Activated CD4-positive, alpha-beta memory T cell treated with anti-CD3 and anti-CD28 coated beads, Interleukin-2, amount 10 ng/mL, durations not matched to agents 7 days and 5 days (primary cell): ENCODE measurements at regions of chr17 and their contacts with region 1.

Region 1: GRCh38 chr17:76182016-76182764 is 41.1 kb upstream of the FOXJ1 start:
- DNase-seq: peak; percentile 96
- H3K4me3 Mint-ChIP-seq: peak overlapping the region; percentile 47
- H3K27ac Mint-ChIP-seq: peak overlapping the region; percentile 95
- H3K4me1 Mint-ChIP-seq: peaks cover 61% of the 10 kb centered on the region
- H3K27me3 Mint-ChIP-seq: no peaks in the 10 kb centered on the region

Region 2: GRCh38 chr17:76141212-76142038 is 40.8 kb before region 1 on chr17 and contains the start of gene FOXJ1:
- CTCF ChIA-PET with region 1: interaction called, 47 read pairs
- POLR2A ChIA-PET with region 1: interaction called, 28 read pairs
- DNase-seq: peak; percentile 94
- H3K4me3 Mint-ChIP-seq: peak within 1 kb of the TSS; percentile 71
- H3K27ac Mint-ChIP-seq: peak within 1 kb of the TSS; percentile 91
- H3K4me1 Mint-ChIP-seq: peaks cover 60% of the 10 kb centered on the region
- H3K27me3 Mint-ChIP-seq: peaks cover 14% of the 10 kb centered on the region
- total RNA-seq, gene FOXJ1: 0.13 to 0.15 TPM

Region 3: DNA sequence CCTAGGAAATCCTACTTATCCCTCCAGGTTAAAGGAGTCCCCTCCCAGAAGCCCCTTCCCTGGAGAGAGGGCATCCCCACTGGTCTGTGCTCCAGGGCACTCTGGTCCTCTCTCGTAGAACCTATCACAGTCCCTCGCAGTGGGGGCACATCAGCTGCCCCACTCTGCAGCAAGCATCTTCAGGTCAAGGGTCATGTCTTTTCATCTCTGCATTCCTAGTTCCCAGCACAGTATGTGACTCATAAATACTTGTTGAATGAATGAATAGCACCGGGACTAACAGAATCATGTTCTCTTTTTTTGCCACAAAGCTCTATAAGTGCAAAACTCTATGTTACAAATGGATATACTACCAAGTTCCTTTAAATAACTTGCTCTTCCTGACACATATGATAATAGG is 22.1 kb after region 1 on chr17:
- CTCF ChIA-PET with region 1: interaction called, 13 read pairs
- POLR2A ChIA-PET with region 1: interaction called, 20 read pairs
- DNase-seq: no peak
- H3K4me3 Mint-ChIP-seq: no peak overlapping the region
- H3K27ac Mint-ChIP-seq: no peak overlapping the region
- H3K4me1 Mint-ChIP-seq: peaks cover 68% of the 10 kb centered on the region
- H3K27me3 Mint-ChIP-seq: no peaks in the 10 kb centered on the region

Region 4: GRCh38 chr17:76246080-76247066 is 64.2 kb after region 1 on chr17:
- CTCF ChIA-PET with region 1: interaction called, 16 read pairs
- POLR2A ChIA-PET with region 1: interaction called, 39 read pairs
- DNase-seq: peak; percentile 87
- H3K4me3 Mint-ChIP-seq: peak overlapping the region; percentile 32
- H3K27ac Mint-ChIP-seq: peak overlapping the region; percentile 94
- H3K4me1 Mint-ChIP-seq: peaks cover 82% of the 10 kb centered on the region
- H3K27me3 Mint-ChIP-seq: peaks cover 5% of the 10 kb centered on the region

Region 5: DNA sequence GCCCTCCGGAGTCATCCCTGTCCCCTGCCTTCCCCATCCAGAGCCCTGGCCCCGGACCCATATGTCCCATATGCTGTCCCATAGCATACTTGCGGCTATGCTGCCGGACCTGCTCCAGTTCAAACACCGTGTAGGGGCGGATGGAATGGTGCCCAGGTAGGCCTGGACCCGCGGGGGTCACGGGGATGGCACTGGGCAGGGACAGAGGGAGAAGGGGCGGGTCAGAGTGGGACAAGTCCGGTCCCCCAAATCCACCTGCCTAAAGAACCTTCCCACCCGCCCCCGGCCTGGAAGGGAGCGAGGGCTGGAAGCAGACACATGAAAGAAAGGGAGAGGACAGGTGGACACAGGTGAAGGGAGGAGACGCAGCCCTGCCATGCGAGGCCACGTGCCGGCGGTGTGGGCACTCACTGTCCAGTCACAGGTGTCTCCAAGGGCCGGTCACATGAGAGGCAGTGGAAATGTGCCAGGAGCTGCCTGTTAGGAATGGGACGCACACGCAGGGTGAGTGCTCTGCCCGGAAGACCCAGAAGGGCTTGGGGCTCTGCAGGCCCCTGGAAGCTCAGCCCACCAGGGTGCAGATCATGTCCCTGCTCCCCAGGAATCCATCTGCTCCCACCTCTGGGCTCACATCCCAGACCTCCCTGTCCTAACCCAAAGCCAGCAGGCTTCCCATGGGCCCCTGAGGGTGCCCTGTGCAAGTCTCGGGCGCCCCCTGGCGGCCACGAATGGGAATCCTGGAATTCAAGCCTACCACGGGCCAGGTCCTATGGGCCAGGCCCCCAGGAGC is 97.0 kb after region 1 on chr17:
- CTCF ChIA-PET with region 1: interaction called, 75 read pairs
- POLR2A ChIA-PET with region 1: interaction called, 1,244 read pairs
- DNase-seq: peak; percentile 88
- H3K4me3 Mint-ChIP-seq: no peak overlapping the region
- H3K27ac Mint-ChIP-seq: no peak overlapping the region
- H3K4me1 Mint-ChIP-seq: peaks cover 13% of the 10 kb centered on the region
- H3K27me3 Mint-ChIP-seq: no peaks in the 10 kb centered on the region